K562 (cell line): ENCODE measurements at regions of chr11 and their contacts with region 1.

Region 1: GRCh38 chr11:83156150-83156995 is 558 bp upstream of the PCF11 start:
- DNase-seq: peak; percentile 92 to 99 (median 95)
- ATAC-seq: peak; percentile 83
- H3K4me3 ChIP-seq: peak overlapping the region; percentile 52
- H3K27ac ChIP-seq: peak overlapping the region; percentile 86
- H3K4me1 ChIP-seq: peaks cover 16 to 30% of the 10 kb centered on the region in 2 experiments
- H3K27me3 ChIP-seq: no peaks in the 10 kb centered on the region
- CTCF ChIP-seq: no peak
- EP300 ChIP-seq: no peak
- POLR2A ChIP-seq: peak; percentile 49
- RAD21 ChIP-seq: no peak; a peak in 1 of 4 replicates

Region 2: GRCh38 chr11:82900277-82901164 is 255.9 kb before region 1 on chr11 and contains the start of gene PRCP:
- CTCF ChIA-PET with region 1: no interaction called
- POLR2A ChIA-PET with region 1: interaction called, 6 read pairs
- in situ Hi-C with region 1: no loop called
- intact Hi-C with region 1: loop called (anchors 2 kb)
- DNase-seq: peak; percentile 87 to 94 (median 90)
- ATAC-seq: peak; percentile 92
- H3K4me3 ChIP-seq: peak within 1 kb of the TSS; percentile 69
- H3K27ac ChIP-seq: peak within 1 kb of the TSS; percentile 77
- H3K4me1 ChIP-seq: peaks cover 8 to 24% of the 10 kb centered on the region in 2 experiments
- H3K27me3 ChIP-seq: no peaks in the 10 kb centered on the region
- CTCF ChIP-seq: 0 out of 6 replicates have a peak, but pooled peaks of 1 of the 3 experiments have one; percentile 5
- EP300 ChIP-seq: peak; percentile 21; the same call in 1 of the 2 replicates
- POLR2A ChIP-seq: peak; percentile 86
- RAD21 ChIP-seq: no peak
- polyA plus RNA-seq, gene PRCP: 28.5 to 34.9 TPM

Region 3: GRCh38 chr11:83087035-83087434 is 69.3 kb before region 1 on chr11:
- CTCF ChIA-PET with region 1: interaction called, 3 read pairs
- POLR2A ChIA-PET with region 1: interaction called, 8 read pairs
- in situ Hi-C with region 1: no loop called
- intact Hi-C with region 1: loop called (anchors 2 kb)
- DNase-seq: no peak
- ATAC-seq: peak; percentile 56; the same call in 2 of the 3 replicates
- H3K4me3 ChIP-seq: no peak overlapping the region
- H3K27ac ChIP-seq: no peak overlapping the region
- H3K4me1 ChIP-seq: peaks cover 6 to 9% of the 10 kb centered on the region in 2 experiments; a peak in 3 of 5 replicates
- H3K27me3 ChIP-seq: no peaks in the 10 kb centered on the region
- CTCF ChIP-seq: peak; percentile 6 to 45 (median 13); a peak in 2 of 6 replicates
- EP300 ChIP-seq: no peak
- POLR2A ChIP-seq: no peak
- RAD21 ChIP-seq: peak; percentile 31 to 54; a peak in 3 of 4 replicates

Region 4: DNA sequence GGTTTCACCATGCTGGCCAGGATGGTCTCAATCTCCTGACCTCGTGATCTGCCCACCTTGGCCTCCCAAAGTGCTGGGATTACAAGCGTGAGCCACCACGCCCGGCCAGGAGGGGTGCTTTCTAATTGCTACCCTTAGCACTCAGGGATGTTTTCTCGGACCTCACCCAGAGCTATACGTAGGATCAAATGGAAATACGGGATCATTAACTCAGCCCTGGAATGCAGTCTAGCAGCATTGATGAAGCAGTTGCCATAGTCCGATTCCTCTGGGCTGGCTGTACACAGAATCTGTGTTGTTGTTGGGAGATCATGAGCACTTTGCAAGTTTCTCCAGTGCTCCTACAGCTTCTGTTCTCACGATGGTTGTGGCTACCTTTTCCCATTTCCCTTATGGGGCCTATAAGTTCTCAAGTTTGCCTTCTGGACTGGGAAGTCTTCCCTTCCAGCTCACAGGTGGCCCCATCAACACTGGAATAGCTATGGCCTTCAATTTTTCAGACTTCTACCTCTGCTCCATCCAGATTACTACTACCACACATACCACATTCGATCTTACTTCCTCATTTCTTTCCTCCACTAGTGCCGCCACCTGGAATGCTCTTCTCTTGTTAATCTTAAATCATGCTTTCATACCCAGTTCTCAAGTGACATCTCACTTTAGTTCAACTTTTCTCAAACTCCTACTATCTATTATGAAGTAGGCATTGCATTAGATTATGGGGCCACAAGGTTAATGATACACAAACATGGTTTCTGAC is 15.5 kb before region 1 on chr11:
- CTCF ChIA-PET with region 1: no interaction called
- POLR2A ChIA-PET with region 1: interaction called, 9 read pairs
- in situ Hi-C with region 1: no loop called
- intact Hi-C with region 1: loop called (anchors 2 kb)
- DNase-seq: no peak
- ATAC-seq: peak; percentile 73
- H3K4me3 ChIP-seq: no peak overlapping the region
- H3K27ac ChIP-seq: peak overlapping the region; percentile 37; the same call in 1 of the 3 replicates
- H3K4me1 ChIP-seq: peaks cover 3% of the 10 kb centered on the region in 2 experiments; a peak in 3 of 5 replicates
- H3K27me3 ChIP-seq: no peaks in the 10 kb centered on the region
- CTCF ChIP-seq: no peak
- EP300 ChIP-seq: no peak
- POLR2A ChIP-seq: no peak
- RAD21 ChIP-seq: no peak

Region 5: DNA sequence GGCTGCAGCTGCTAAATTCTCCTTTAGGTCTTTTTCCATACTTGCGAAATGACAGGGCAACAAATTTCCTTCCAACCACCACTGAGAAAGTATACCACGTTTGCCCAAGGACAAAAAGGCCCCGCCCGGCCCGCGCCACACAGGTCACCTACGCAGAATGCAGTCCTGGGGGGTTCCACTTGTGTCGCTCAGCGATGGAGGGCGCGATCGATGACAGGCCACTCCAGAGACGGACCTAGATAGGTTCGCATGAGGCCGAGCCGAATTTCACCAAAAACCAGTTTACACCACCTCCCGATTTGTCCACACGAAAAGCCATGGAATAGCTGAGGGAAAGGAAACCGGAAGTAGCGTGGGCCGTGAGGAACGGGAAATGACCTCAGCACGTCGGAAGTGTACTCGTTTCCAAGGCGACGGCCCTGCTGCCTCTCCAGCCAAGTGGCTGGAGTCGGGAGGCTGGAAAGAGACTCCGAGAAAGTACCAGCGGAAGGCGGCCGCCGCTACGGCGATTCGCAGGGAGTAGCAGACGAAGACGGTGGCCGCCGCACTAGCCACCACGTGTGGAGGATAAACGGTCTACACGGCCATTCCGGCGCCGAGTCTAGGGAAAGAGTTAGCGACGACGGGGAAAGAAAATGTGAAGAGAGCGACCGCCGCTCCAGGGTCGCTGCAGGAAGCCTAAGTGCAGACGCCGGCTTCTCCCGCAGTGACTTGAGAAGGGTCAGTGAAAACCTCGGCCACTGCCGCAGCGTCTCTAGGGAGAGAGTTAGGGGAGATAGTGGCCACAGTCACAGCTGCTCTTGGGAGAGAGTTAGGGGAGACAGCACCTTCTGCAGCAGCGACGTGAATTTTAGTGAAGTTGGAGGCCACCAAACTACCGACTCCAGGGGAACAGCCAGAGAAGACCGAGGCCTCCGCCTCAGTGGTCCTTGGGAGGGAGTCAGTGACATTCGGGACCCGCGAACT is 37.2 kb after region 1 on chr11 and contains the start of gene ANKRD42:
- CTCF ChIA-PET with region 1: no interaction called
- POLR2A ChIA-PET with region 1: interaction called, 10 read pairs
- in situ Hi-C with region 1: no loop called
- intact Hi-C with region 1: loop called (anchors 2 kb)
- DNase-seq: peak; percentile 85 to 97 (median 88)
- ATAC-seq: peak; percentile 86
- H3K4me3 ChIP-seq: peak within 1 kb of the TSS; percentile 82
- H3K27ac ChIP-seq: peak within 1 kb of the TSS; percentile 92
- H3K4me1 ChIP-seq: peaks cover 8 to 10% of the 10 kb centered on the region in 2 experiments; a peak in 3 of 5 replicates
- H3K27me3 ChIP-seq: no peaks in the 10 kb centered on the region
- CTCF ChIP-seq: no peak
- EP300 ChIP-seq: no peak
- POLR2A ChIP-seq: peak; percentile 89
- RAD21 ChIP-seq: no peak
- polyA plus RNA-seq, gene ANKRD42: 2.8 to 5.5 TPM